Left cardiac atrium (tissue), 4 donors: ENCODE measurements at regions of chr17 and their contacts with region 1.

Region 1: GRCh38 chr17:58447039-58447975 is 30.0 kb upstream of the RNF43 start:
- DNase-seq: peak; percentile 41
- ATAC-seq: peak; percentile 73 to 84

Region 2: GRCh38 chr17:58317421-58318064 is 129.8 kb before region 1 on chr17:
- intact Hi-C with region 1: loop called in 1 of 2 experiments (anchors 5 kb)
- DNase-seq: peak; percentile 29
- ATAC-seq: peak; percentile 66 to 70